Right ventricle myocardium inferior (tissue), 1 donor: ENCODE measurements at regions of chr18 and their contacts with region 1.

Region 1: DNA sequence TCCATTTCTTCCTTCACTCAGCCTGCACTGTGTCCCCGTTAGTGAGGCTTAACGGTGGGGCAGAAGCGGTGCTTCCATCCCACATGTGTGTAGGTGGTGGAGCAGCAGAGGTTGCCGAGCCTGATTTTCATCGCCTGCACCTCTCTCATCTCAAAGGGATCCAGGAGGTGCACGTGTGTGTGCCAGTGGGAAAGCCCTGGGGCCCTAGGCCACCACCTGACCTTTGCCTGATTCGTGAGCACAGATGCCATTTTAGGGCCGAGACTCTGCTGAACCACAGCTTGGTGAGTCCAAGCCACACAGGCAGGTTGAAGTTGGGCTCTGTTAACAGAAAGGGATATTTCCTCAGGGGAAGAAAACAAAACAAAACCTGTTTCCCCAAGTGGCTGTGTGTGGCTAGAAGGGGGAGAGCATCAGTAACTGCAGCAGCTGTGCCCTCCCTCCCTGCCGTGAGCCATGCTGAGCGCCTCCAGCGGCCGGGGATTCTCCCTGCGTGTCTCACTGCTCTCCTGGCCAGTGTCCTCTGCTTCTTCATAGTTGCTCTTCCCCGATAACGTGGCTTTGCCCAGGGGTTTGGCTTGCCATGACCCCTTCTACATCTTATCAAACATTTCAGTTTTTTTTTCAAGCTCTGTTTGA is 81.5 kb downstream of the MAPRE2 start:
- DNase-seq: no peak
- ATAC-seq: no peak

Region 2: DNA sequence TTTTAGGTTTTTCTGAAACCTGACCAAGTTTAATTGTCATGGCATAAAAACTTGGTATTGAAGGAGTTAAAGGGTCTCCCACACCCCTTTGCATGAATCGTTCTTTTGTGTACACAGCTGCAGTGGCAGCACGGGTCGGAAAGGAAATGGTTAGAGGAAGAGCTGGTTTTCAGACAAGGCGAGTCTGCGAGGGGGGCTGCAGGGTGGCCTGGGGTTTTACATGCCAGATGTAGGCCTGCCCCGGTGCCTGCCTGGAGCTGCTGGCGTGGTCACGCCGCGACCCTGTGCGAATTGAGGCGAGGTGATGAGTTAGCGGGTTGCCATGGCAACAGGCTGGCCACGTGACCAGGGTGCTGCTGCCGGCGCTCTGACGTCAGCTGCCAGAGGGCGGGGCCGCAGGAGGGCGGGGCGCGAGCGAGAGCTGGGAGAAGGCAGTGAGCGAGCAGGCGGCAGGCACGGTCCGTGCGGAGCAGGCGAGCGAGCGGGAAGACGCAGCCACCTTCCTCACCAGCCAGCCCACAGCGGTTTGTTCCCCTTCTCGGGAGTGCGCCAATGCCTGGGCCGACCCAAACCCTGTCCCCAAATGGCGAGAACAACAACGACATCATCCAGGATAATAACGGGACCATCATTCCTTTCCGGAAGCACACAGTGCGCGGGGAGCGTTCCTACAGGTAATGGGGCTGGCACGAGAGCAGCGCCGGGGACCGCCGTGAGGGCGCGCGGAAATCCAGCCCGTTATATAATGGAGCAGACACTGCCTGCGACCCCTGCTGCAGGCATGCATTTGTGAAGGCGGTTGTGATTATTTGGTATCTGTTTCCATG is 81.5 kb before region 1 on chr18 and contains the start of gene MAPRE2:
- intact Hi-C with region 1: loop called (anchors 2 kb)
- DNase-seq: peak; percentile 100
- ATAC-seq: peak; percentile 97
- total RNA-seq, gene MAPRE2: 112 TPM

Region 3: DNA sequence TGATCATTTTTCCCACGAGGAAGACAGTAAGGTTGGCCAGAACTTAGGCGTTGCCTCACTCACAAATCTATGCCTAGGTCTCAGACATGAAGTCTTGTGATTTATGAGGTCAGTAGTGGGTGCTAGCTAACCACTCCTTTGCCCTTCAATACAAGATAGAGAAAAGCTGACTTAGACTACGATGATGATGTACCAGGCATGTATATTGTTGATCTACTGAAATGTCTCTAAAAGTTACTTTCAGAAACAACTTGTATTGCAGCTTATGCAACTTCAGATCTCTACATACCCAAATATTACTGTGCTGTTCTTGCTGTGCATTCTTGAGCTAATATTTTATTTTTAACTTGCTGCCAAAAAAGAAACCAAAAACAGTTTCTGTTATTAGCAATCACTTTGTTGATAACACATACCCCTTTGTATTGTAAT is 50.9 kb before region 1 on chr18:
- intact Hi-C with region 1: loop called (anchors 10 kb)
- DNase-seq: no peak
- ATAC-seq: peak; percentile 49